AG04450 (cell line): ENCODE measurements at regions of chr3 and their contacts with region 1.

Region 1: GRCh38 chr3:101849051-101849720 is at the start of gene NFKBIZ:
- DNase-seq: peak; percentile 71
- H3K4me3 ChIP-seq: peak within 1 kb of the TSS; percentile 77
- H3K27ac ChIP-seq: peak within 1 kb of the TSS; percentile 92
- H3K27me3 ChIP-seq: no peaks in the 10 kb centered on the region
- CTCF ChIP-seq: no peak
- polyA plus RNA-seq, gene NFKBIZ: 27.3 and 29.6 TPM in 2 replicates

Region 2: DNA sequence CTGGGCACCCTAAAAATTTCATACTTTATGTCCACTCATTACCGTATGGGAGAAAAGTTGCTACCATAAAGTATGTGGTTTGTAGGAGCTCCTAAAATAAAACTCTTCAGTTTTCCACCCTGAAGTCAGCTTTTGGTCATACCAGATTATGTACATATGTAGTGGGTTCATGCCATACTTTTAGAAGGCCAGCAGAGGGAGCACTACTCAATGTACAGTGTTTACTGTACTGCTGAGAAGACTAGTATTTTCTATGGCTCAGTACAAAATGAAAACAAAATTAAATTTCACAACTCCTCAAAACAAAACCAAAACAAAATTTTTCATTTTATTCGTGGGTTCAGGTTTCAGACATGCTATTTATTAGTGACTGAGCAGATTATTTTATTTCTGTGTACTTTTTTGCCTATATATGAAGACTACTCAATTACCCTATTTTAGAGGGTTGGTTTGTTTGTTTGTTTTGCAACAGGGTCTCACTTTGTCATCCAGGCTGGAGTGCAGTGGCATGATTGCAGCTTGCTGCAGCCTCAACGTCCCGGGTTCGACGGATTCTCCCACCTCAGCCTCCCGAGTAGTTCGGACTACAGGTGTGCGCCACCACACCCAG is 45.9 kb before region 1 on chr3:
- CTCF ChIA-PET with region 1: interaction called, 11 read pairs
- POLR2A ChIA-PET with region 1: interaction called, 3 read pairs
- DNase-seq: peak; percentile 54
- H3K4me3 ChIP-seq: no peak overlapping the region
- H3K27ac ChIP-seq: no peak overlapping the region
- H3K27me3 ChIP-seq: no peaks in the 10 kb centered on the region
- CTCF ChIP-seq: peak; percentile 86

Region 3: GRCh38 chr3:101813817-101814440 is 35.3 kb before region 1 on chr3:
- CTCF ChIA-PET with region 1: interaction called, 10 read pairs
- POLR2A ChIA-PET with region 1: interaction called, 4 read pairs
- DNase-seq: no peak
- H3K4me3 ChIP-seq: no peak overlapping the region
- H3K27ac ChIP-seq: no peak overlapping the region
- H3K27me3 ChIP-seq: no peaks in the 10 kb centered on the region
- CTCF ChIP-seq: peak; percentile 53

Region 4: GRCh38 chr3:101827211-101828174 is 21.7 kb before region 1 on chr3:
- CTCF ChIA-PET with region 1: no interaction called
- POLR2A ChIA-PET with region 1: interaction called, 39 read pairs
- DNase-seq: no peak
- H3K4me3 ChIP-seq: peak overlapping the region; percentile 67
- H3K27ac ChIP-seq: peak overlapping the region; percentile 93
- H3K27me3 ChIP-seq: no peaks in the 10 kb centered on the region
- CTCF ChIP-seq: no peak

Region 5: GRCh38 chr3:101836652-101837598 is 12.3 kb before region 1 on chr3:
- CTCF ChIA-PET with region 1: interaction called, 3 read pairs
- POLR2A ChIA-PET with region 1: interaction called, 14 read pairs
- DNase-seq: no peak
- H3K4me3 ChIP-seq: no peak overlapping the region
- H3K27ac ChIP-seq: no peak overlapping the region
- H3K27me3 ChIP-seq: no peaks in the 10 kb centered on the region
- CTCF ChIP-seq: no peak

Region 6: DNA sequence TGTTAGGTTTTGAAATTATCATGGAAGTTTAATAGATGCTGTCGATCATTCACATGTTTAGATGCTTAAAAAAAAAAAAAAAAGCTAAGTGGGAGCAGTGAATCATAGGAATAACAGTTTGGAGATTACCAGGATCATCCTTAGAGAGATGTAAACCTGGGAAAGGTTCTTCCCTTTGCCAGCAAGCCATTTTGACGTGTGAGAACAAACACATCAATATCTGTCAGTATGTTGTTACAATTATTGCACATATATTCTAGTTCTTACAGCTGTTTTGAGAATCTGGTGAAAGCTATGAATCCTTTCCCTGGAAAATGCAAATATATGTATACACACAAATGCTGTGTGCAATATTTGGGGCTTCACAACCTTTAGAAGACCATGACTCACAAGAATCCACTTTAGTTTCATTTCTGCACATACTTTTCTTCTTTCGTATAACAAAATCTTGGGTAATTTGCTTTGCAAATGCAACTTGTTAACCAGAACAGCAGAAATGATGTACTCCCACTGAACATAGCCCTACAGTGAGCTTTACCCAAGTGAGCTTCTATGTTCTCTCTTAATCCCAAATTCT is 12.1 kb after region 1 on chr3:
- CTCF ChIA-PET with region 1: interaction called, 3 read pairs
- POLR2A ChIA-PET with region 1: interaction called, 13 read pairs
- DNase-seq: no peak
- H3K4me3 ChIP-seq: no peak overlapping the region
- H3K27ac ChIP-seq: no peak overlapping the region
- H3K27me3 ChIP-seq: no peaks in the 10 kb centered on the region
- CTCF ChIP-seq: no peak

Region 7: DNA sequence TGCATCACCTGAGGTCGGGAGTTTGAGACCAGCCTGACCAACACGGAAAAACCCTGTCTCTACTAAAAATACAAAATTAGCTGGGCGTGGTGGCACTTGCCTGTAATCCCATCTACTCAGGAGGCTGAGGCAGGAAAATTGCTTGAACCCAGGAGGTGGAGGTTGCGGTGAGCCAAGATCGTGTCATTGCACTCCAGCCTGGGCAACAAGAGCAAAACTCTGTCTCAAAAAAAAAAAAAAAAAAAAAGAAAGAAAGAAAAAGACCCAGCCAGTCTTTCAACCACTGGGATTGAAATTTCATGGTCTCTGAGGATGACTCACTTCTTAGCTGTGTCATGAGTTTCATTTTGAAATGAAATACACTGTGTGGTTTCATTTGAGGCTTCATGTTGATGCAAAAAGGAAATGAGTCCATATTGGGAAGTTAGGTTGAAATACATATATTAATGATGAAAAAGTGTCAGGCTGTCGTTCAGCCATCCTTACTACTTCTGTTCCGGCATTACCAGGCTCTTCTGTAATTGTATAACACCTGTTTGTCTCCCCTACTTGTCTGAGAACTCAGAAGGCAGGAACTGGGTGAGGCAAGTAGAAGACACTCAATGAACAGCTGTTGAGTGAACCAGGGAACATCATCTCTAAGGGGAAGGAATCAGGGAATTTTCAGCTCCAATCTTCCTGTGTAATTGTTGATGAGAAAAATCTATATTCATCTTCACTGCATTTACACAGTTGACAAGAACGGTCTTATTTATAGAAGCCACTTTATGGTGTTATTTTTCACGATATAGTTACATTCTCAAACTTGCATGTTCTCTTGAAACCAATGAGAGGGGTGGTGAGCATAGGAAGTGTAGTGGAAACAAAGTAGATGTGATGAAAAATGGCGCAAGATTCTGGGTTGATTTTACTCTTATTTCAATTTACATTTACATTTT is 87.5 kb after region 1 on chr3:
- CTCF ChIA-PET with region 1: no interaction called
- POLR2A ChIA-PET with region 1: interaction called, 14 read pairs
- DNase-seq: peak; percentile 52
- H3K4me3 ChIP-seq: no peak overlapping the region
- H3K27ac ChIP-seq: peak overlapping the region; percentile 80
- H3K27me3 ChIP-seq: no peaks in the 10 kb centered on the region
- CTCF ChIP-seq: no peak